CD4-positive, alpha-beta memory T cell (primary cell): ENCODE measurements at regions of chr6 and their contacts with region 1.

Region 1: GRCh38 chr6:129730477-129731165 is 20.6 kb upstream of the ARHGAP18 start:
- DNase-seq: peak; percentile 38 to 61 (median 56)
- H3K4me3 ChIP-seq: no peak overlapping the region
- H3K4me3 Mint-ChIP-seq: no peak overlapping the region
- H3K27ac ChIP-seq: no peak overlapping the region
- H3K27ac Mint-ChIP-seq: peak overlapping the region in 4 of 7 donors; percentile 16 to 73 (median 54)
- H3K4me1 ChIP-seq: peaks cover 13% of the 10 kb centered on the region
- H3K4me1 Mint-ChIP-seq: peaks cover 6 to 11% (median 9%) of the 10 kb centered on the region in 4 donors
- H3K27me3 ChIP-seq: no peaks in the 10 kb centered on the region
- H3K27me3 Mint-ChIP-seq: no peaks in the 10 kb centered on the region

Region 2: GRCh38 chr6:129498950-129499842 is 231.4 kb before region 1 on chr6:
- CTCF ChIA-PET with region 1: interaction called, 18 read pairs
- POLR2A ChIA-PET with region 1: no interaction called
- intact Hi-C with region 1: loop called (anchors 1 kb)
- DNase-seq: peak; percentile 29 to 62 (median 55)
- H3K4me3 ChIP-seq: no peak overlapping the region
- H3K4me3 Mint-ChIP-seq: peak overlapping the region; percentile 37 to 89 (median 76)
- H3K27ac ChIP-seq: no peak overlapping the region
- H3K27ac Mint-ChIP-seq: peak overlapping the region in 5 of 7 donors; percentile 1 to 50 (median 19)
- H3K4me1 ChIP-seq: peaks cover 21% of the 10 kb centered on the region
- H3K4me1 Mint-ChIP-seq: peaks cover 15 to 24% (median 19%) of the 10 kb centered on the region in 4 donors
- H3K27me3 ChIP-seq: no peaks in the 10 kb centered on the region
- H3K27me3 Mint-ChIP-seq: no peaks in the 10 kb centered on the region

Region 3: GRCh38 chr6:129672881-129673643 is 57.6 kb before region 1 on chr6:
- CTCF ChIA-PET with region 1: interaction called, 131 read pairs
- POLR2A ChIA-PET with region 1: interaction called, 6 read pairs
- intact Hi-C with region 1: loop called (anchors 1 kb)
- DNase-seq: peak; percentile 18 to 48 (median 19)
- H3K4me3 ChIP-seq: peak overlapping the region in 1 of 2 donors; percentile 53
- H3K4me3 Mint-ChIP-seq: peak overlapping the region; percentile 80 to 87 (median 82)
- H3K27ac ChIP-seq: peak overlapping the region; percentile 56
- H3K27ac Mint-ChIP-seq: peak overlapping the region; percentile 74 to 94 (median 92)
- H3K4me1 ChIP-seq: peaks cover 32% of the 10 kb centered on the region
- H3K4me1 Mint-ChIP-seq: peaks cover 29 to 31% (median 29%) of the 10 kb centered on the region in 4 donors
- H3K27me3 ChIP-seq: no peaks in the 10 kb centered on the region
- H3K27me3 Mint-ChIP-seq: no peaks in the 10 kb centered on the region

Region 4: DNA sequence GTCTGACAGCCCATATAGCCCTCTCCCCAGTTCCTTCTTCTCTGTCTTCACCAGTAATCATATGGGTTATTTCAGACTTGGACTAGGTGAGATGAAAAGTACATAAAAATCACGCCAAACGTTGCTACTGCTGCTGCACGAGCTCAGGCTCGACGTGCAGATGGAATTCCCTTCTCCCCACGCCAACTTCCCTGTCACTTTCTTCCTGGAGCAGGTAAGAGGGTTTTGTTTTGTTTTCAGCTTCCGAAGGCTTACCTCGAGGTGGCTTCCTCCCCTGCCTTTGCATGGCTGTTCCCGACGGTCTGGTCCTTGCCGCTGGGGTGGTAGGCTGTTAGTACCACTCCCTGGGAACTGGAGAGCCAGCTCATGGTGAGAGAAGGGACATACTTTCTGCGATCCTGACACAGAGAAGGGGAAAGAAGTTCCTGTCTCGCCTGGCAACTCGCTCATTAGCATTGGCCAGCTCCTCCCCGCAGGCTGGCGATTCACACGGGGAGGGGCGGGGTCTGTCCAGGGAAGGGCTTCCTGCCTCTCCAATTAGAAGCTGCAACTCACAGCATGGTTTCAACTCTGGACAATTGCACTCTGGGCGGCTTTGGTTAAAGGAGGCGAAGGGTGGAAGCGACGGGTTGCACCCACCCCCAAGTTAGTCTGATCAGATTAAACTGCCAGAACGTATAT is 20.7 kb before region 1 on chr6 and contains the start of gene ARHGAP18:
- CTCF ChIA-PET with region 1: interaction called, 31 read pairs
- POLR2A ChIA-PET with region 1: interaction called, 4 read pairs
- intact Hi-C with region 1: no loop called
- DNase-seq: peak; percentile 58 to 76 (median 68)
- H3K4me3 ChIP-seq: peak within 1 kb of the TSS; percentile 81 to 97
- H3K4me3 Mint-ChIP-seq: peak within 1 kb of the TSS; percentile 95 to 99 (median 98)
- H3K27ac ChIP-seq: peak within 1 kb of the TSS; percentile 65
- H3K27ac Mint-ChIP-seq: peak within 1 kb of the TSS; percentile 57 to 96 (median 94)
- H3K4me1 ChIP-seq: peaks cover 38% of the 10 kb centered on the region
- H3K4me1 Mint-ChIP-seq: peaks cover 29 to 45% (median 38%) of the 10 kb centered on the region in 4 donors
- H3K27me3 ChIP-seq: no peaks in the 10 kb centered on the region
- H3K27me3 Mint-ChIP-seq: peaks cover 0 to 2% of the 10 kb centered on the region in 2 donors
- total RNA-seq, gene ARHGAP18: 4.3 to 4.6 TPM

Region 5: GRCh38 chr6:129748212-129748900 is 17.7 kb after region 1 on chr6:
- CTCF ChIA-PET with region 1: no interaction called
- POLR2A ChIA-PET with region 1: interaction called, 11 read pairs
- intact Hi-C with region 1: loop called (anchors 1 kb)
- DNase-seq: peak; percentile 56 to 71 (median 60)
- H3K4me3 ChIP-seq: peak overlapping the region; percentile 12 to 68
- H3K4me3 Mint-ChIP-seq: peak overlapping the region; percentile 73 to 93 (median 86)
- H3K27ac ChIP-seq: peak overlapping the region; percentile 59
- H3K27ac Mint-ChIP-seq: peak overlapping the region; percentile 85 to 97 (median 96)
- H3K4me1 ChIP-seq: peaks cover 61% of the 10 kb centered on the region
- H3K4me1 Mint-ChIP-seq: peaks cover 42 to 61% (median 55%) of the 10 kb centered on the region in 4 donors
- H3K27me3 ChIP-seq: no peaks in the 10 kb centered on the region
- H3K27me3 Mint-ChIP-seq: no peaks in the 10 kb centered on the region